ENCODE measurements at regions of chr14 and their contacts with region 1.

Region 1: DNA sequence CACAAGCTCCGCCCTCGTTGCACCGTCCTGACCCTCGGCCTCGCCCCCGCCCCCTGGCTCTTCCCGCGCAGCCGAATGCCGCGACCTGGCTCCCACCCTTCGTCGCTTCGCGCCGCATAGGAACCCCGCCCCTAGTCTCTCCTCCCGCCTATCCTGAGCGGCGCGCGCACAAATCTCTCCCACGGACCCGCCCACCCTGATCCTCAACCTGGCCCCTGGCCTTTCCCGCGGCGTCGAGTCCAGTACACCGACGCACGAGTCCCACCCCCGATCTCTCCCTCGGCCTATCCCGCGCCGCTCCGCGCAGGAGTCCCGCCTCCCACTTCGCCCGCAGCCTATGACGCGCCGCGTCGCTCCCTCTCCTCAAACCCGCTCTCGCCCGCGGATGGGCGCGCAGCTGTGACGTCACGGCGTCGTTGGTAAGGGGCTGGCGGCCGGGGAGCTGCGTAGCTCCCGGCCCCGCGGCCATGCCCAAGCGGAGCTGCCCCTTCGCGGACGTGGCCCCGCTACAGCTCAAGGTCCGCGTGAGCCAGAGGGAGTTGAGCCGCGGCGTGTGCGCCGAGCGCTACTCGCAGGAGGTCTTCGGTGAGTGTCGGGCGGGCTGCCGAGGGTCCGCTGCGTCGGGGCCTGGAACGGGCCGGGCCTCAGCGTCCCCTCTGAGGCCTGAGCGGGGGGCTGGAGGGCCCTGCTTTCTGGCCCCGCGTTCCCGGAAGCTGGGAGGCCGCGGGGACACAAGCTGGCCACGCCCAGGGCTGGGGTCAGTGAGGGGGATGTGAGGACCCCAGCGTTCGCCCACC is at the start of gene SIVA1:
- DNase-seq: peak; percentile 98 to 100 (median 99)
- ATAC-seq: peak; percentile 94
- H3K4me3 ChIP-seq: peak within 1 kb of the TSS; percentile 95
- H3K4me3 Mint-ChIP-seq: peak within 1 kb of the TSS; percentile 88 to 97 (median 92)
- H3K27ac ChIP-seq: peak within 1 kb of the TSS; percentile 95
- H3K27ac Mint-ChIP-seq: peak within 1 kb of the TSS; percentile 78 to 94 (median 92)
- H3K4me1 ChIP-seq: peaks cover 14 to 29% of the 10 kb centered on the region in 2 donors
- H3K4me1 Mint-ChIP-seq: peaks cover 19 to 45% (median 36%) of the 10 kb centered on the region in 7 donors
- H3K27me3 ChIP-seq: no peaks in the 10 kb centered on the region
- H3K27me3 Mint-ChIP-seq: no peaks in the 10 kb centered on the region
- total RNA-seq, gene SIVA1: 61.4 to 97.7 (median 77.4) TPM

Region 2: DNA sequence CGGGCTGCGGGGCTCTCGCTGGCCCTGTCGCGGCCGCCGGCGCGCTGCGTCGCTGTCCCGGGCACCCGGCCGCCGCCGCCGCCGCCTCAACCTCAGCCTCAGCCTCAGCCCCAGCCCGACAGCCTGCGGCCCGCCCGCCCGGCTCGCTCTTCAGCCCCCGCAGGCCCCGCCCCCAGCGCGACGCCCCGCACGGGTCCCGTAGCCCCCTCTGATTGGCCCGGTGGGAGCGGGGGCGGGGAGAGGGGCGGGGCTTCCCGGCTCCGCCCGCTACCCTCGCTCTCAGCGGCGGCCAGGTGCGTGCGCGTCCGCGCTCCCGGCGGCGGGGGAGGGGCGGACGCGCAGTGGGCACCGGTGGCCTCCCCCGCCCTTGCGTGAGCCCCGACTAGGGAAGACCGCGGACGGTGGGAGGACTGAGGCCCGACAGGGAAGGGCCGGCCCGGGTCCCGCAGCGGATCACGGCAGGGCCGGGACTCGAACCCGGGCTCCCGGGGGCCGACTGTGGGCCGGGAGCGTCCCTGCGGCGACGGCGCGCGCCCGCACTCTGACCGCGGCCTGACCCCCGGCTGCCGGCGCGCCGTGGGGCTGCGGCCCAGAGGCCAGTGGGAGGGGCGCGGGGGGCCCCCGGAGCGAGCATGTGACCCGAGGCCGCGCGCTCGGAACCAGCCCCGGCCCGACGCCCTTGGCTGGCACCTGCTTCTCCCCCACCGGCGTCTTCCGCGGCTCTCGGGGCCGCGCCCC is 905.3 kb before region 1 on chr14 and contains the start of gene PPP1R13B:
- CTCF ChIA-PET with region 1: no interaction called
- POLR2A ChIA-PET with region 1: no interaction called
- intact Hi-C with region 1: loop called in 1 of 2 experiments (anchors 5 kb)
- DNase-seq: peak; percentile 85 to 97 (median 91)
- ATAC-seq: peak; percentile 99
- H3K4me3 ChIP-seq: peak within 1 kb of the TSS; percentile 51
- H3K4me3 Mint-ChIP-seq: peak within 1 kb of the TSS; percentile 78 to 94 (median 89)
- H3K27ac ChIP-seq: peak within 1 kb of the TSS; percentile 67
- H3K27ac Mint-ChIP-seq: peak within 1 kb of the TSS; percentile 60 to 92 (median 79)
- H3K4me1 ChIP-seq: no peaks in the 10 kb centered on the region
- H3K4me1 Mint-ChIP-seq: peaks cover 11 to 24% (median 17%) of the 10 kb centered on the region in 7 donors
- H3K27me3 ChIP-seq: no peaks in the 10 kb centered on the region
- H3K27me3 Mint-ChIP-seq: peaks cover 0 to 36% (median 0%) of the 10 kb centered on the region in 5 donors
- total RNA-seq, gene PPP1R13B: 10.8 to 26.8 (median 17.7) TPM

Region 3: GRCh38 chr14:104723648-104724406 is 29.1 kb before region 1 on chr14 and contains the start of gene ADSS1:
- CTCF ChIA-PET with region 1: interaction called, 5 read pairs
- POLR2A ChIA-PET with region 1: interaction called, 10 read pairs
- intact Hi-C with region 1: loop called (anchors 1 kb)
- DNase-seq: peak; percentile 39 to 79 (median 68)
- ATAC-seq: peak; percentile 89
- H3K4me3 ChIP-seq: peak within 1 kb of the TSS; percentile 70
- H3K4me3 Mint-ChIP-seq: peak within 1 kb of the TSS; percentile 43 to 80 (median 63)
- H3K27ac ChIP-seq: peak within 1 kb of the TSS; percentile 58
- H3K27ac Mint-ChIP-seq: peak within 1 kb of the TSS in 1 of 9 donors; percentile 22
- H3K4me1 ChIP-seq: peaks cover 0 to 6% of the 10 kb centered on the region in 2 donors
- H3K4me1 Mint-ChIP-seq: peaks cover 0 to 7% (median 0%) of the 10 kb centered on the region in 7 donors
- H3K27me3 ChIP-seq: no peaks in the 10 kb centered on the region
- H3K27me3 Mint-ChIP-seq: no peaks in the 10 kb centered on the region
- total RNA-seq, gene ADSS1: 0.73 to 4.8 (median 4.2) TPM

Region 4: GRCh38 chr14:104826189-104826860 is 73.4 kb after region 1 on chr14:
- CTCF ChIA-PET with region 1: interaction called, 4 read pairs
- POLR2A ChIA-PET with region 1: interaction called, 6 read pairs
- intact Hi-C with region 1: loop called (anchors 1 kb)
- DNase-seq: peak; percentile 84 to 100 (median 93)
- ATAC-seq: peak; percentile 96
- H3K4me3 ChIP-seq: peak overlapping the region; percentile 71
- H3K4me3 Mint-ChIP-seq: peak overlapping the region; percentile 64 to 91 (median 84)
- H3K27ac ChIP-seq: peak overlapping the region; percentile 46
- H3K27ac Mint-ChIP-seq: peak overlapping the region in 4 of 9 donors; percentile 46 to 80 (median 73)
- H3K4me1 ChIP-seq: peaks cover 10 to 12% of the 10 kb centered on the region in 2 donors
- H3K4me1 Mint-ChIP-seq: peaks cover 12 to 26% (median 15%) of the 10 kb centered on the region in 7 donors
- H3K27me3 ChIP-seq: no peaks in the 10 kb centered on the region
- H3K27me3 Mint-ChIP-seq: peaks cover 0 to 33% (median 0%) of the 10 kb centered on the region in 5 donors

Region 5: DNA sequence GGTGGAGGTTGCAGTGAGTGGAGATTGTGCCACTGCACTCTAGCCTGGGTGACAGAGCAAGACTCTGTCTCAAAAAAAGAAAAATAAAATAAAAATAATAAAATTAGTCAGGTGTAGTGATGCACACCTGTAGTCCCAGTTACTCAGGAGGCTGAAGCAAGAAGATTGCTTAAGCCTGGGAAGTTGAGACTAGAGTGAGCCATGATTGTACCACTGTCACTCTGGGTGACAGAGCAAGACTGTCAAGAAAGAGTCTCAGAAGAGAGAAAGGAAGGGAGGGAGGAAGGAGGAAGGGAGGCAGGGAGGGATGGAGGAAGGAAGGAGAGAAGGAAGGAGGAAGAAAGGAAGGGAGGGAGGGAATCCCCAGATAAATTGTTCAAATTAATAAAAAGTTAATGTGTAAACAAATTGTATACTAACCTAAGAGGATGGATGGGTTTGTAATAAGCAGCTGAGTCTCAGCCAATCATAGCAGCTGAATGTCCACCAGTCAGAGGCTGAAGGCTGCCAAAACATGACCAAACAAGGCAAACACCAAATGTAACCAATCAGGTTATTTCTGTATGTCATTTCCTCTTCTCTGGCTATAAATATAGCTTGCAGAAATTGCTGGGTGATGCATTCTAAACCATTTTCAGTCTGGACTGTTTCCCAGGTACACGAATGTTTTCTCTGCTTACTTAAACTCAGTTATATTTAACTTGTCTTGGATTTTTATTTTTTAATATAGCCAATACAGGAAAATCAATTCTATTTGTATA is 274.1 kb after region 1 on chr14:
- CTCF ChIA-PET with region 1: no interaction called
- POLR2A ChIA-PET with region 1: no interaction called
- intact Hi-C with region 1: no loop called
- DNase-seq: no peak
- ATAC-seq: no peak
- H3K4me3 ChIP-seq: no peak overlapping the region
- H3K4me3 Mint-ChIP-seq: peak overlapping the region in 2 of 10 donors; percentile 50 to 79
- H3K27ac ChIP-seq: no peak overlapping the region
- H3K27ac Mint-ChIP-seq: peak overlapping the region in 2 of 9 donors; percentile 48 to 78
- H3K4me1 ChIP-seq: peaks cover 5 to 16% of the 10 kb centered on the region in 2 donors
- H3K4me1 Mint-ChIP-seq: peaks cover 5 to 38% (median 13%) of the 10 kb centered on the region in 7 donors
- H3K27me3 ChIP-seq: no peaks in the 10 kb centered on the region
- H3K27me3 Mint-ChIP-seq: no peaks in the 10 kb centered on the region

Region 6: DNA sequence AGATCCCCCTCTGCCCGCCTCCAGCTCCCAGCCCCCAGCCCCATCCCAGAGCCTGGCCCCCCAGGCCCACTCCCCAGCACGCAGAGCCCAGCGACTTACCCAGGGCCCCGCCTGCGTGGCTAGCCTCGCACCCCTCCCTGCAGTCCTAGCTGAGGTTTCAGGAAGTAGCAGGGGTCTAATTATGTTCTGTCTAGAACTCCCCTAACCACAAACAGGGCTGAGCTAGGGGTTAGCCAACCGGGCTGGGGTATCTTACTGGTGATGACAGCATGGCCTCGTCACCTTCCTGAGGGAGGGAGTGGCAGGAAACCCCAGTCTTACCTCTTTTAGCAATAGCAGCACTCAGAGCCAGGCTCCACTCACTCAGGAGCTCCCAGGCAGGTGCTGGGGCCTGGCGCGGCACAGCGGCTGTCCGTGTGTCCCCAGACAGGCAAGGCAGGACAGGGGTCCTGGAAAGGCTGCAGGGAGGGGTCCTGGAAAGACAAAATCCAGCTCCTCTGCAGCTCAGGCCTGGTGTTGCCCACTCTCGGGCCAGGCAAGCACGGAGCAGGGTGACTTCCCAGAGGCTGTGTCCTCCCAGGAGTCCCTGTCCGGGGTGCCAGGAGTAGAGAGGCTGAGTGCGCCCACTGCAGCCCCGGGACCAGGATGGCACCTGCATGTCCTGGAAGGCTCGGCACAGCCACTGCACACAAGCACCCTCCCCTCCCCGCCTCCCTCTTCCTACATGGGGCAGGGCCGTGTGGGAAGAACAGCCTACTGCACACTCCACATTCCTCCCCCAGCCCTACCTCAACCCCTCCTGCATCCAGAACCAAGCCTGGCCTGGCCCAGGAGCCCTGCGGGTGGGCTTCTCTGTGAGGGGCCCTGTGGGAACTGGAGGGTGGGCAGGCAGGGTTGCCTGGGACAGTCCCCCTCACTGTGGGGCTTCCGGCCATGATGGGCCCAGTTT is 312.6 kb after region 1 on chr14 and contains the start of gene GPR132:
- CTCF ChIA-PET with region 1: no interaction called
- POLR2A ChIA-PET with region 1: no interaction called
- intact Hi-C with region 1: loop called in 1 of 2 experiments (anchors 1 kb)
- DNase-seq: peak; percentile 73 to 99 (median 96)
- ATAC-seq: peak; percentile 93
- H3K4me3 ChIP-seq: peak within 1 kb of the TSS; percentile 97
- H3K4me3 Mint-ChIP-seq: peak within 1 kb of the TSS; percentile 82 to 96 (median 90)
- H3K27ac ChIP-seq: peak within 1 kb of the TSS; percentile 96
- H3K27ac Mint-ChIP-seq: peak within 1 kb of the TSS; percentile 93 to 99 (median 98)
- H3K4me1 ChIP-seq: peaks cover 66 to 80% of the 10 kb centered on the region in 2 donors
- H3K4me1 Mint-ChIP-seq: peaks cover 36 to 85% (median 58%) of the 10 kb centered on the region in 7 donors
- H3K27me3 ChIP-seq: no peaks in the 10 kb centered on the region
- H3K27me3 Mint-ChIP-seq: no peaks in the 10 kb centered on the region
- total RNA-seq, gene GPR132: 37.8 to 58.7 (median 45.2) TPM

Region 7: DNA sequence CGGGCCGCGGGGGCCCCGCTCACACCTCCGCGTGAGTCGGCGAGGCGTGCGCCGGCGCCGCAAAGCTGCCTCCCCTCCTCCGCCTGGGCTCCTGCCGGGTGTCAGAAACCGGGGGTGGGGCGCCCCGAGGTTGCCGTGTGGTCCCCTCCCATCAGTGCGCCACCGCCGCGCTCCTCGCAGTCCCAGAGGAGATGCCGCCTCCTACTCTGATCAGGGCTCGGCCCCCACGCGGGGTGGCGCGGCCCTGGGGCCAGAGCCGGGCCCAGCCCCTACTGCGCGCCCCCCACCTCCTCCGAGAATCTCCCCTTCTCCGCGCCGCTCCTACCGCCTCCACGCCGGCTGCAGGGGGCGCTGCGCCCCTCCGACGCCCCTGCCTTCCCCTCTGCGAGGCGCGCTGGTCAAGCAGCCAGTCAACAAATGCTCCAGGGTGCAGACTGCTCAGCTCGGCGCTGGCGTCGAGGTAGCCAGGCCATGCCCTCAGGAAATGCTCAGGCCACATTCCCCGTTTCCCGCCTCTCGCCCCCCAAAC is 416.1 kb after region 1 on chr14:
- CTCF ChIA-PET with region 1: no interaction called
- POLR2A ChIA-PET with region 1: no interaction called
- intact Hi-C with region 1: no loop called
- DNase-seq: peak in 5 of 9 donors; percentile 29 to 52 (median 36)
- ATAC-seq: peak; percentile 51
- H3K4me3 ChIP-seq: no peak overlapping the region
- H3K4me3 Mint-ChIP-seq: peak overlapping the region; percentile 14 to 81 (median 64)
- H3K27ac ChIP-seq: no peak overlapping the region
- H3K27ac Mint-ChIP-seq: no peak overlapping the region
- H3K4me1 ChIP-seq: peaks cover 6 to 11% of the 10 kb centered on the region in 2 donors
- H3K4me1 Mint-ChIP-seq: peaks cover 0 to 13% (median 5%) of the 10 kb centered on the region in 7 donors
- H3K27me3 ChIP-seq: peaks cover 0 to 6% of the 10 kb centered on the region in 2 donors
- H3K27me3 Mint-ChIP-seq: peaks cover 0 to 23% (median 15%) of the 10 kb centered on the region in 5 donors

Region 8: DNA sequence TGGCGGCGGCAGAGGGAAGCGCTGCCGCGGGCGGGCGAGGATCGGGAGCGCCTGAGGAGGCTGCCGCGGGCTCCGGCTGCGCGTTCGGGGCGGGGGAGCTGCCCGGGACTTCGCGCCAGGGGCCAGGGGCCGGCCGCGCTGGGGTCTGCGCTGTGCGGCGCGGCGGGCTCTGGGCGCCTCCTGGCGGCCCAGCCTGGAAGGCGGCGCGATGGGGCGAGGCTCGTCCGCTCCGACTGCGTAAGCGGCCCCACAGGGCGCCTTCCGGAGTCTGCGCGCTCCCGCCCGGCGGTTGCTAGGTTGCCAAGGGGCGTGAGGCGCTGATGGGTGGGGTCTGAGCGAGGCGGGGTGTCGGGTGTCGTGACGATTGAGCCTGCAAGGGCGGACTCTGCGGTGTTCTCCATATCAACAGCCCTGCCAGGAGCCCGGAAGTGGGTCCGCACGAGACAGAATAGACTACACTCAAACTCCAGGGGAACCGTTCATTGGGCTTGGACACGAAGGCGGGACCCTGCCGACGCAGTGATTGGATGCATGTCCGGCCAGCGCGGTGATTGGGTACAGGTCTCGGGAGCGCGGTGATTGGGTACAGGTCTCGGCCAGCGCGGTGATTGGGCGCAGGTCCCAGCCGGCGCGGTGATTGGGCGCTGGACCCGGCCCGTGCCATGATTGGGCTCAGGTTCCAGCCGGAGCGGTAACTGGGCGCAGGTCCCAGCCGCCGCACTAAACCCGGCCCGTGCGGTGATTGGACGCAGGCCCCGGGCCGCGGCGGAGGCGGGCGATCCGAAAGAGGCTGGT is 737.8 kb after region 1 on chr14 and contains the start of gene TEDC1:
- CTCF ChIA-PET with region 1: no interaction called
- POLR2A ChIA-PET with region 1: no interaction called
- intact Hi-C with region 1: loop called (anchors 1 to 2 kb)
- DNase-seq: peak; percentile 96 to 100 (median 100)
- ATAC-seq: peak; percentile 75
- H3K4me3 ChIP-seq: peak within 1 kb of the TSS; percentile 85
- H3K4me3 Mint-ChIP-seq: peak within 1 kb of the TSS; percentile 79 to 95 (median 86)
- H3K27ac ChIP-seq: peak within 1 kb of the TSS; percentile 100
- H3K27ac Mint-ChIP-seq: peak within 1 kb of the TSS; percentile 84 to 99 (median 96)
- H3K4me1 ChIP-seq: peaks cover 16 to 24% of the 10 kb centered on the region in 2 donors
- H3K4me1 Mint-ChIP-seq: peaks cover 5 to 24% (median 19%) of the 10 kb centered on the region in 7 donors
- H3K27me3 ChIP-seq: no peaks in the 10 kb centered on the region
- H3K27me3 Mint-ChIP-seq: no peaks in the 10 kb centered on the region
- total RNA-seq, gene TEDC1: 19.7 to 294 (median 31.3) TPM

Measured in naive thymus-derived CD4-positive, alpha-beta T cell (primary cell).